CD8-positive, alpha-beta memory T cell (primary cell): ENCODE measurements at regions of chr17 and their contacts with region 1.

Region 1: GRCh38 chr17:64506576-64507477 is at the start of gene CEP95:
- DNase-seq: peak; percentile 93 to 99 (median 97)
- H3K4me3 ChIP-seq: peak within 1 kb of the TSS; percentile 91
- H3K4me3 Mint-ChIP-seq: peak within 1 kb of the TSS; percentile 96 to 100 (median 99)
- H3K27ac ChIP-seq: peak within 1 kb of the TSS; percentile 98
- H3K27ac Mint-ChIP-seq: peak within 1 kb of the TSS; percentile 99 to 100 (median 99)
- H3K4me1 ChIP-seq: peaks cover 48% of the 10 kb centered on the region
- H3K4me1 Mint-ChIP-seq: peaks cover 52 to 77% (median 70%) of the 10 kb centered on the region in 3 donors
- H3K27me3 ChIP-seq: no peaks in the 10 kb centered on the region
- H3K27me3 Mint-ChIP-seq: peaks cover 0 to 24% of the 10 kb centered on the region in 2 donors
- total RNA-seq, gene CEP95: 39.3 to 43.5 TPM

Region 2: GRCh38 chr17:64393000-64393402 is 113.8 kb before region 1 on chr17:
- CTCF ChIA-PET with region 1: interaction called, 3 read pairs
- POLR2A ChIA-PET with region 1: interaction called, 13 read pairs
- DNase-seq: peak; percentile 12 to 74 (median 59)
- H3K4me3 ChIP-seq: peak overlapping the region; percentile 47
- H3K4me3 Mint-ChIP-seq: peak overlapping the region; percentile 77 to 92 (median 86)
- H3K27ac ChIP-seq: peak overlapping the region; percentile 51
- H3K27ac Mint-ChIP-seq: peak overlapping the region; percentile 84 to 98 (median 96)
- H3K4me1 ChIP-seq: peaks cover 70% of the 10 kb centered on the region
- H3K4me1 Mint-ChIP-seq: peaks cover 57 to 70% (median 57%) of the 10 kb centered on the region in 3 donors
- H3K27me3 ChIP-seq: no peaks in the 10 kb centered on the region
- H3K27me3 Mint-ChIP-seq: no peaks in the 10 kb centered on the region

Region 3: DNA sequence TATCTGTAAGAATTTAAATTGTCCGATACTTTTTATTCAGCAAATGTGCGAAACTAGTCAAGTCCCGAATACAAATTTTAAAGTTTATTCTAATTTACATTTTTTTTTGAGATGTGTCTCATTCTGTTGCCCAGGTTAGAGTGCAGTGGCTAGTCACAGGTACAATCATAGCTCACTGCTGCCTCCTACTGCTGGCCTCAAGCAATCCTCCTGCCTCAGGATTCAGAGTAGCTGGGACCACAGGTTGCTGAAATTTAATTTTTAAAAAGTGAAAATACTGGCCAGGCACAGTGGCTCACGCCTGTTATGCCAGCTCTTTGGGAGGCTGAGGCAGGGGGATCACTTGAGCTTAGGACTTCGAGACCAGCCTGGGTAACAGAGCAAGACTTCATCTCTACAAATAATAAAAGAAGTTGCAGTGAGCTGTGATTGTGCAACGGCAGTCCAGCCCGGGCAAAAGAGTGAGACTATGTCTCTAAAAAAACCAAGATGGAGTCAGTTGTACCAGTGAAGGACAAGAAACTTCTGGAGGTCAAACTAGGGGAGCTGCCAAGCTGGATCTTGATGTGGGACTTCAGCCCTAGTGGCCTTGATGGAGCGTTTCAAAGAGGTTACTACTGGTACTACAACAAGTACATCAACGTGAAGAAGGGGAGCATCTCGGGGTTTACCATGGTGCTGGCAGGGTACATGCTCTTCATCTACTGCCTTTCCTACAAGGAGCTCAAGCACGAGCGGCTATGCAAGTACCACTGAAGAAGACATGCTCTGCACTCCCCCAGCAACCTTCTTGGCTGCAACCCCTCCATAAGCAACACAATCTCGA is 15.6 kb before region 1 on chr17:
- CTCF ChIA-PET with region 1: interaction called, 37 read pairs
- POLR2A ChIA-PET with region 1: interaction called, 168 read pairs
- DNase-seq: peak; percentile 9 to 55 (median 33)
- H3K4me3 ChIP-seq: no peak overlapping the region
- H3K4me3 Mint-ChIP-seq: peak overlapping the region in 1 of 7 donors; percentile 46
- H3K27ac ChIP-seq: no peak overlapping the region
- H3K27ac Mint-ChIP-seq: peak overlapping the region in 1 of 8 donors; percentile 92
- H3K4me1 ChIP-seq: peaks cover 29% of the 10 kb centered on the region
- H3K4me1 Mint-ChIP-seq: peaks cover 24 to 39% (median 34%) of the 10 kb centered on the region in 3 donors
- H3K27me3 ChIP-seq: no peaks in the 10 kb centered on the region
- H3K27me3 Mint-ChIP-seq: no peaks in the 10 kb centered on the region

Region 4: GRCh38 chr17:64661976-64662773 is 155.3 kb after region 1 on chr17 and contains the start of gene SMURF2:
- CTCF ChIA-PET with region 1: no interaction called
- POLR2A ChIA-PET with region 1: interaction called, 10 read pairs
- DNase-seq: peak; percentile 73 to 89 (median 83)
- H3K4me3 ChIP-seq: peak within 1 kb of the TSS; percentile 85
- H3K4me3 Mint-ChIP-seq: peak within 1 kb of the TSS; percentile 97 to 100 (median 99)
- H3K27ac ChIP-seq: peak within 1 kb of the TSS; percentile 64
- H3K27ac Mint-ChIP-seq: peak within 1 kb of the TSS; percentile 94 to 99 (median 96)
- H3K4me1 ChIP-seq: peaks cover 22% of the 10 kb centered on the region
- H3K4me1 Mint-ChIP-seq: peaks cover 33 to 47% (median 44%) of the 10 kb centered on the region in 3 donors
- H3K27me3 ChIP-seq: no peaks in the 10 kb centered on the region
- H3K27me3 Mint-ChIP-seq: no peaks in the 10 kb centered on the region
- total RNA-seq, gene SMURF2: 18.9 to 19.0 TPM

Region 5: GRCh38 chr17:64709481-64709880 is 202.7 kb after region 1 on chr17:
- CTCF ChIA-PET with region 1: interaction called, 3 read pairs
- POLR2A ChIA-PET with region 1: interaction called, 12 read pairs
- DNase-seq: no peak
- H3K4me3 ChIP-seq: peak overlapping the region; percentile 27
- H3K4me3 Mint-ChIP-seq: peak overlapping the region; percentile 56 to 82 (median 64)
- H3K27ac ChIP-seq: peak overlapping the region; percentile 41
- H3K27ac Mint-ChIP-seq: peak overlapping the region; percentile 88 to 99 (median 95)
- H3K4me1 ChIP-seq: peaks cover 65% of the 10 kb centered on the region
- H3K4me1 Mint-ChIP-seq: peaks cover 68 to 82% (median 81%) of the 10 kb centered on the region in 3 donors
- H3K27me3 ChIP-seq: no peaks in the 10 kb centered on the region
- H3K27me3 Mint-ChIP-seq: peaks cover 0 to 2% of the 10 kb centered on the region in 2 donors